Activated CD8-positive, alpha-beta T cell treated with anti-CD3 and anti-CD28 coated beads, Interleukin-2, amount 10 ng/mL, durations not matched to agents 7 days and 5 days (primary cell): ENCODE measurements at regions of chr3 and their contacts with region 1.

Region 1: GRCh38 chr3:18758047-18758704 is 333.0 kb upstream of the SATB1 start:
- DNase-seq: peak; percentile 69
- ATAC-seq: peak; percentile 94
- H3K4me3 Mint-ChIP-seq: no peak overlapping the region
- H3K27ac Mint-ChIP-seq: peak overlapping the region; percentile 44
- H3K4me1 Mint-ChIP-seq: peaks cover 41% of the 10 kb centered on the region
- H3K27me3 Mint-ChIP-seq: no peaks in the 10 kb centered on the region

Region 2: GRCh38 chr3:18431266-18431665 is 326.9 kb before region 1 on chr3:
- CTCF ChIA-PET with region 1: interaction called, 21 read pairs
- POLR2A ChIA-PET with region 1: no interaction called
- DNase-seq: no peak
- ATAC-seq: no peak
- H3K4me3 Mint-ChIP-seq: peak overlapping the region; percentile 72
- H3K27ac Mint-ChIP-seq: peak overlapping the region; percentile 66
- H3K4me1 Mint-ChIP-seq: peaks cover 71% of the 10 kb centered on the region
- H3K27me3 Mint-ChIP-seq: no peaks in the 10 kb centered on the region

Region 3: DNA sequence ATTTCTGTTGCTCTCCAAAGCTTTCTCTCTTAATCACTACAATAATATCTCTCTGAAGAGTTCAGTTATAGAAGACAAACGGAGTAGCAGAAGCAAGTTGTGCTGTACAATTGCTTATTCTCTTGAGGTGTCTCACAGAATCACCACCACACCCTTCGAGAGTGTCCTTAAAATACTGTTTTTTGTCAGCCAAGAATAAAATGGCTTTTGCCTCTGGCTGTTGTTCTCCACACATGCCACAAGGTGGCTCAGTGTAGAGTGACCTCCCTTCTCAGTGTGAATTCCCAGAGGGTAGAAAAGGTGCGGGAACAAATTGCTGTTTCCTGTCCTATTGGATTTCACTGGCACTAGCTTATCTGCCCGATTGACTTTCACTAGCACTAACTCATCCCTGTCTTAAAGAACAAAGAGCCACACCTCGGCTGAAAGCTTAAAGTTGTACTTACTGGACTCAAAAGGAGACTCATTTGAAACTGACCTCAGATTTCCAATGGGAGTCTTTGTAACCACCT is 198.8 kb before region 1 on chr3:
- CTCF ChIA-PET with region 1: interaction called, 67 read pairs
- POLR2A ChIA-PET with region 1: interaction called, 8 read pairs
- DNase-seq: peak; percentile 44
- ATAC-seq: peak; percentile 28
- H3K4me3 Mint-ChIP-seq: no peak overlapping the region
- H3K27ac Mint-ChIP-seq: peak overlapping the region; percentile 73
- H3K4me1 Mint-ChIP-seq: peaks cover 52% of the 10 kb centered on the region
- H3K27me3 Mint-ChIP-seq: no peaks in the 10 kb centered on the region

Region 4: GRCh38 chr3:18717598-18717997 is 40.6 kb before region 1 on chr3:
- CTCF ChIA-PET with region 1: interaction called, 36 read pairs
- POLR2A ChIA-PET with region 1: interaction called, 10 read pairs
- DNase-seq: no peak
- ATAC-seq: peak; percentile 11
- H3K4me3 Mint-ChIP-seq: peak overlapping the region; percentile 36
- H3K27ac Mint-ChIP-seq: peak overlapping the region; percentile 95
- H3K4me1 Mint-ChIP-seq: peaks cover 75% of the 10 kb centered on the region
- H3K27me3 Mint-ChIP-seq: no peaks in the 10 kb centered on the region

Region 5: DNA sequence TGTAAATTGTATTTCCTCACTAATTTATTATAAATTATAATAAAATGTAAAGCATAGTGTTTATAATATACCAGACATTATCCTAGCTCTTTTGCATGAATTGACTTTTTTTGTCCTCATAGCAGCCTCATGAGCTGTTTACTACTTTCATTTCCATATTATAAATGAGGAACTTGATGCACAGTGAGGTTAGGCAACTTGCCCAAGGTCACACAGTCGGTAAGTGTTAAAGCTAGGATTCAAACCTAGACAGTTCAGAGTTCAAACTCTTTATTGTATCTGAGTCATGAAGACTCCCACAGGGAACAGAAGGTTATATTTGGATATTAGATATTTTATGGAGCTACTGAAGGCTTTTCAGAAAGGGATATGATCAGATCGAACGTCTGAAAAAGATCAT is 10.8 kb before region 1 on chr3:
- CTCF ChIA-PET with region 1: interaction called, 67 read pairs
- POLR2A ChIA-PET with region 1: interaction called, 9 read pairs
- DNase-seq: no peak
- ATAC-seq: no peak
- H3K4me3 Mint-ChIP-seq: no peak overlapping the region
- H3K27ac Mint-ChIP-seq: no peak overlapping the region
- H3K4me1 Mint-ChIP-seq: peaks cover 72% of the 10 kb centered on the region
- H3K27me3 Mint-ChIP-seq: no peaks in the 10 kb centered on the region

Region 6: GRCh38 chr3:18787441-18787840 is 29.3 kb after region 1 on chr3:
- CTCF ChIA-PET with region 1: interaction called, 10 read pairs
- POLR2A ChIA-PET with region 1: no interaction called
- DNase-seq: no peak
- ATAC-seq: no peak
- H3K4me3 Mint-ChIP-seq: no peak overlapping the region
- H3K27ac Mint-ChIP-seq: no peak overlapping the region
- H3K4me1 Mint-ChIP-seq: peaks cover under 1% of the 10 kb centered on the region
- H3K27me3 Mint-ChIP-seq: peaks cover 2% of the 10 kb centered on the region

Region 7: DNA sequence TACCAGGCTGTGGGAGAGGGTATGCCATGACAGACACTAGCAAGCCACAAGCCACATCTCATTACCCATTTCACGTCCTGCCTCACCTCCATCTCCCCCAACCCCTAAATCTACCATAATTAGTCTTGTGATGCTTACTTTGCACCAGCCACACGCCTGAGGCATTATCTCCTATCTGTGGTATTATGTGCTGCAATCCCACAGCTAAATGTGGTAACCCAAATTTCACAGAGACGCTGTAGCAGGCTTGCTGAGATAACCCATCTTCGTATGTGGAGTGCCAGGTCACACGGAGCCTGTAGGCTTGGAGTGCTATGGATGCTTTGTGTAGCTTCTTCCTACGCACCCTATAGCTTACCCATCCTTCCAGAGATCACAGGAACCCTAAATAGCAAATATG is 133.5 kb after region 1 on chr3:
- CTCF ChIA-PET with region 1: no interaction called
- POLR2A ChIA-PET with region 1: no interaction called
- DNase-seq: peak; percentile 44
- ATAC-seq: peak; percentile 81
- H3K4me3 Mint-ChIP-seq: no peak overlapping the region
- H3K27ac Mint-ChIP-seq: no peak overlapping the region
- H3K4me1 Mint-ChIP-seq: peaks cover 20% of the 10 kb centered on the region
- H3K27me3 Mint-ChIP-seq: peaks cover 7% of the 10 kb centered on the region